ENCODE measurements at regions of chr1 and their contacts with region 1.

Region 1: GRCh38 chr1:44594871-44595746 is 79.2 kb downstream of the TMEM53 start:
- ATAC-seq: peak; percentile 56 to 100 (median 79)
- H3K4me3 ChIP-seq: no peak overlapping the region
- H3K27ac ChIP-seq: no peak overlapping the region
- H3K4me1 ChIP-seq: peaks cover 64 to 66% of the 10 kb centered on the region in 2 donors

Region 2: GRCh38 chr1:44377925-44378784 is 217.0 kb before region 1 on chr1:
- in situ Hi-C with region 1: loop called in 3 of 9 experiments (anchors 25 kb)
- ATAC-seq: peak in 7 of 8 experiments; percentile 29 to 61 (median 44)
- H3K4me3 ChIP-seq: no peak overlapping the region
- H3K27ac ChIP-seq: no peak overlapping the region
- H3K4me1 ChIP-seq: peaks cover 0 to 7% of the 10 kb centered on the region in 2 donors

Region 3: DNA sequence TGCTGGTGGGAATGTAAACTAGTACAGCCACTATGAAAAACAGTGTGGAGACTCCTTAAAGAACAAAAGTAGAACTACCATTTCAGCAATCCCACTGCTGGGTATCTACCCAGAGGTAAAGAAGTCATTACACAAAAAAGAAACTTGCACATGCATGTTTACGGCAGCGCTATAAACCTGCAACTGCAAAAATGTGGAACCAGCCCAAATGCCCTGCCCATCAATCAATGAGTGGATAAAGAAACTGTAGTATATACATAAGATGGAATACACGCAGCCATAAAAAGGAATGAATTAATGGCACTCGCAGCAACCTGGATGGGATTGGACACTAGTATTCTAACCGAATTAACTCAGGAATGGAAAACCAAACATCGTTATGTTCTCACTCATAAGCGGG is 560.3 kb after region 1 on chr1:
- in situ Hi-C with region 1: no loop called
- ATAC-seq: no peak
- H3K4me3 ChIP-seq: no peak overlapping the region
- H3K27ac ChIP-seq: no peak overlapping the region
- H3K4me1 ChIP-seq: no peaks in the 10 kb centered on the region

Region 4: DNA sequence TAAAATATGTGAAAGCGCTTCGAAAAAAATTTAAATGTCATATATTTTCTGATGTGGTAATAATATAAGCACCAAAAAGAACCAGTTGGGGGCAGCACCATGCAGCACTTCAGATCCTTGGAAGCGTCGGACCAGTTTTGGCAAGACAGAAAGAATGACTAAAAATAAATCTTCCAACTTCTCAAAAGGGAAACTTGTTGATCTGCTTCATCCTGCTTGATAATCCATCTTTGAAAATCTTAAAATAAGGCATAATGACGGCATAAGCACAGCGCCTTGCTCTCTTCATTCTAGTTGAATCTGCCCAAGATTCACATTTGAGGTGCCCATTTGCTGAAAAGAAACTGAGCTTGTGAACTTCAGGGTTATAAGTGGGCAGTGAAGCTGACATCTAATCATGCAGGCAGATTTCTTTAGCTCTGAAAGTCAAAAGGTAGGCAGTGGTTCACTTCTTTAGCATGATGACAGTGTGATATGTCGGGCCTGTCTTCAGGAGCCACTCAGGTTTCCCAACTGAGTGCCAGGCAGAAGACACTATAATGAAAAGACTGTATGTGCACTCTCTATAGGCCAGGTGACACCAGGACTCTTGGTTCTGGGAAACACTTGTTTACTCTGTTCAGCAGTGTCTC is 764.9 kb after region 1 on chr1:
- in situ Hi-C with region 1: no loop called
- ATAC-seq: peak in 6 of 8 experiments; percentile 13 to 39 (median 31)
- H3K4me3 ChIP-seq: no peak overlapping the region
- H3K27ac ChIP-seq: no peak overlapping the region
- H3K4me1 ChIP-seq: peaks cover 11 to 13% of the 10 kb centered on the region in 2 donors